ENCODE measurements at regions of chr12 and their contacts with region 1.

Region 1: GRCh38 chr12:19186722-19187661 is 57.5 kb downstream of the PLEKHA5 start:
- DNase-seq: no peak
- H3K4me3 ChIP-seq: no peak overlapping the region
- H3K27ac ChIP-seq: peak overlapping the region in 2 of 4 donors; percentile 34 to 43
- H3K4me1 ChIP-seq: peaks cover 42 to 87% (median 78%) of the 10 kb centered on the region in 4 donors
- H3K27me3 ChIP-seq: no peaks in the 10 kb centered on the region
- CTCF ChIP-seq: peak; percentile 56 to 69 (median 56)
- EP300 ChIP-seq: no peak
- POLR2A ChIP-seq: no peak

Region 2: DNA sequence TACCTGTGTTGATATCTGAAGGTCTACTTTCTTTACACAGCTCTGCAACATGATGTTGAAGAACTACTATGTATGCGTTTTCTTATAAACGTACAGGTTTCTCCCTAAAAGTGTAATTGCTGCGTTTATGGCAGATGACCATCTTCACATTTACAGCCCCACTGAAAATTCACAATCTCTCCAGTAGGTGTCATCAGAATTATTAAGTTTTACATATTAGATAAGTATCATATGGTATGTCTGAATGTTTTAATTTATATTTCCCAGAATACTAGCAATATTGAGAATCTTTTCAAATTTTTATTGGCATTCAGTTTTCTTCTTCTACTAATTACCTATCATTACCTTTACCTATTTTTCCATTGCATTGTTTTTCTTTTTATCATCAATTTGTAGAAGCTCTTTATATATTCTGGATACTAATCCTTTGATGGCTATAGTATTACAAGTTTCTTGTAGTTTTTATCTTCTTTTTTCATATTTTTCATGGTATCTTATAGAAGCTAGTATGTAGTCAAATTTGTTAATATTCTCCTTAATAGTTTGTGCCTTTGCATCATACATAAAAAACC is 325.6 kb before region 1 on chr12:
- intact Hi-C with region 1: loop called (anchors 10 kb)
- DNase-seq: no peak
- H3K4me3 ChIP-seq: no peak overlapping the region
- H3K27ac ChIP-seq: no peak overlapping the region
- H3K4me1 ChIP-seq: peaks cover 0 to 16% (median 12%) of the 10 kb centered on the region in 4 donors
- H3K27me3 ChIP-seq: no peaks in the 10 kb centered on the region
- CTCF ChIP-seq: peak; percentile 26 to 62 (median 43)
- EP300 ChIP-seq: no peak
- POLR2A ChIP-seq: no peak

Region 3: DNA sequence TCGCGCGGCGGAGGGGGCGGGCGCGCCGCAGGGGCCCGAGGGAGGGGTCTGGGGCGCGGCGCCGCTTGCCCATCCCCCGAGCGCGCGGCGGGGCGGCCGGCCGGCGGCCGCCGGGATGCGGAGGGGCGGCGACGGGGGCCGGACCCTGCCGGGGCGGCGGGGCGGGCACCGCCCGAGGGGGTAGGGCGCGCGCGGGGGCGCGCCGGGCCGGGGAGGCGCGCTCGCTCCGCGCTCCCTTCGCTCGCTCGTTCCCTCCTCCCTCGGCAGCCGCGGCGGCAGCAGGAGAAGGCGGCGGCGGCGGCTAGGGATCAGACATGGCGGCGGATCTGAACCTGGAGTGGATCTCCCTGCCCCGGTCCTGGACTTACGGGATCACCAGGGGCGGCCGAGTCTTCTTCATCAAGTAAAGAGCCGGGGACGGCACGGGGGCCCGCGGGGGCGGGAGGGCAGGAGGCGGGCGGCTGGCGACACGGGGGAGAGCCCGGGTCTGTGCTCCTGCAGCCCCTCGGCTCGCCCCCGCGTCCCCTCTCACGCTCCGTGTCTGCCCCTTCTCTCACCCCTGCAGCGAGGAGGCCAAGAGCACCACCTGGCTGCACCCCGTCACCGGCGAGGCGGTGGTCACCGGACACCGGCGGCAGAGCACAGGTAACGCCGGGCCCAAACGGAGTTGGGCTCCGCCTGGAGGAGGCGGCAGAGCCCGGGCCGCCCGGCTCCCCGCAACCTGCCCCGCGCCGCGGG is 57.3 kb before region 1 on chr12 and contains the start of gene PLEKHA5:
- intact Hi-C with region 1: loop called (anchors 10 kb)
- DNase-seq: no peak
- H3K4me3 ChIP-seq: peak within 1 kb of the TSS; percentile 86 to 100 (median 98)
- H3K27ac ChIP-seq: peak within 1 kb of the TSS; percentile 94 to 97 (median 96)
- H3K4me1 ChIP-seq: peaks cover 0 to 30% (median 27%) of the 10 kb centered on the region in 4 donors
- H3K27me3 ChIP-seq: no peaks in the 10 kb centered on the region
- CTCF ChIP-seq: peak; percentile 39 to 50 (median 41)
- EP300 ChIP-seq: no peak
- POLR2A ChIP-seq: no peak
- total RNA-seq, gene PLEKHA5: 50.7 to 88.5 (median 58.6) TPM

Region 4: GRCh38 chr12:19288603-19289244 is 101.7 kb after region 1 on chr12:
- intact Hi-C with region 1: loop called (anchors 10 kb)
- DNase-seq: no peak
- H3K4me3 ChIP-seq: no peak overlapping the region
- H3K27ac ChIP-seq: no peak overlapping the region
- H3K4me1 ChIP-seq: peaks cover 0 to 22% (median 16%) of the 10 kb centered on the region in 4 donors
- H3K27me3 ChIP-seq: no peaks in the 10 kb centered on the region
- CTCF ChIP-seq: peak; percentile 63 to 69 (median 69)
- EP300 ChIP-seq: no peak
- POLR2A ChIP-seq: no peak